HCT116 (cell line): ENCODE measurements at regions of chr9 and their contacts with region 1.

Region 1: GRCh38 chr9:128034821-128035764 is 32.0 kb downstream of the NAIF1 start:
- DNase-seq: peak; percentile 85
- ATAC-seq: peak; percentile 92
- H3K4me3 ChIP-seq: no peak overlapping the region
- H3K27ac ChIP-seq: no peak overlapping the region
- H3K4me1 ChIP-seq: peaks cover 0 to 30% of the 10 kb centered on the region in 2 experiments; a peak in 2 of 4 replicates
- H3K27me3 ChIP-seq: no peaks in the 10 kb centered on the region
- CTCF ChIP-seq: peak; percentile 72 to 96 (median 87)
- POLR2A ChIP-seq: no peak
- RAD21 ChIP-seq: peak; percentile 99

Region 2: GRCh38 chr9:127930231-127931091 is 104.6 kb before region 1 on chr9 and contains the start of gene PIP5KL1:
- CTCF ChIA-PET with region 1: no interaction called
- POLR2A ChIA-PET with region 1: no interaction called
- RAD21 ChIA-PET with region 1: interaction called in 1 of 2 experiments, 3 read pairs
- intact Hi-C with region 1: loop called (anchors 5 kb)
- DNase-seq: peak; percentile 52
- ATAC-seq: peak; percentile 68
- H3K4me3 ChIP-seq: peak within 1 kb of the TSS; percentile 29 to 55
- H3K27ac ChIP-seq: peak within 1 kb of the TSS; percentile 84
- H3K4me1 ChIP-seq: peaks cover 52 to 89% of the 10 kb centered on the region in 2 experiments
- H3K27me3 ChIP-seq: no peaks in the 10 kb centered on the region
- CTCF ChIP-seq: peak in 1 of 3 experiments; percentile 8; a peak in 1 of 6 replicates
- POLR2A ChIP-seq: no peak
- RAD21 ChIP-seq: no peak
- total RNA-seq, gene PIP5KL1: 37.6 TPM

Region 3: GRCh38 chr9:128053560-128053959 is 18.5 kb after region 1 on chr9:
- CTCF ChIA-PET with region 1: interaction called, 13 read pairs
- POLR2A ChIA-PET with region 1: interaction called, 4 read pairs
- RAD21 ChIA-PET with region 1: no interaction called
- intact Hi-C with region 1: no loop called
- DNase-seq: no peak
- ATAC-seq: no peak
- H3K4me3 ChIP-seq: no peak overlapping the region
- H3K27ac ChIP-seq: no peak overlapping the region
- H3K4me1 ChIP-seq: peaks cover 43 to 66% of the 10 kb centered on the region in 2 experiments
- H3K27me3 ChIP-seq: no peaks in the 10 kb centered on the region
- CTCF ChIP-seq: no peak
- POLR2A ChIP-seq: no peak
- RAD21 ChIP-seq: no peak